ENCODE measurements at regions of chr3 and their contacts with region 1.

Region 1: GRCh38 chr3:153319705-153320554 is 157.9 kb downstream of the RAP2B start:
- DNase-seq: no peak
- H3K4me3 Mint-ChIP-seq: peak overlapping the region; percentile 25
- H3K27ac Mint-ChIP-seq: peak overlapping the region; percentile 78
- H3K4me1 Mint-ChIP-seq: peaks cover 23% of the 10 kb centered on the region
- H3K27me3 Mint-ChIP-seq: no peaks in the 10 kb centered on the region

Region 2: GRCh38 chr3:153284282-153284938 is 35.5 kb before region 1 on chr3:
- CTCF ChIA-PET with region 1: no interaction called
- intact Hi-C with region 1: loop called (anchors 1 kb)
- DNase-seq: peak; percentile 72
- H3K4me3 Mint-ChIP-seq: no peak overlapping the region
- H3K27ac Mint-ChIP-seq: peak overlapping the region; percentile 68
- H3K4me1 Mint-ChIP-seq: peaks cover 40% of the 10 kb centered on the region
- H3K27me3 Mint-ChIP-seq: no peaks in the 10 kb centered on the region

Region 3: DNA sequence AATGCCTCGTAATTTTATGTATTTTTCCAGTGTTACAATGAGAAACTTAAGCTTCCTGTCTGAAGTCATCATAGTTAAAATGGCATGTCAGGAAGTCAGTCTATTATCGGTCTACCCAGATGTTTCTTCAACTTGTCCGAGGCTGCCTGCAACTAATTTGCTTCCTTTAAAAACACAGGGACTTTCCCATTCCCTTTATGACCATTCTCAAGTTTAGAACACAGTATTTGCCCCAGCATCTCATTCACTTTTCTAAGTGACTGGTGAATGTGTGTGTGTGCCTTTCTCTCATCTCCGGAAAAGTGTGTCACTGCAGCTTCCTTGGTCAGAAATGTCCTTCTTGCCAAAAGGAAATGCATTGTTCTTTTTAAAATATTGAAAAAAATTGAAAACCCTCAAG is 308.7 kb after region 1 on chr3:
- CTCF ChIA-PET with region 1: no interaction called
- intact Hi-C with region 1: loop called (anchors 1 kb)
- DNase-seq: peak; percentile 33
- H3K4me3 Mint-ChIP-seq: no peak overlapping the region
- H3K27ac Mint-ChIP-seq: peak overlapping the region; percentile 68
- H3K4me1 Mint-ChIP-seq: peaks cover 83% of the 10 kb centered on the region
- H3K27me3 Mint-ChIP-seq: no peaks in the 10 kb centered on the region

Measured in activated naive CD4-positive, alpha-beta T cell treated with anti-CD3 and anti-CD28 coated beads for 36 hours (primary cell).